Aorta (tissue), 5 donors: ENCODE measurements at regions of chr1 and their contacts with region 1.

Region 1: DNA sequence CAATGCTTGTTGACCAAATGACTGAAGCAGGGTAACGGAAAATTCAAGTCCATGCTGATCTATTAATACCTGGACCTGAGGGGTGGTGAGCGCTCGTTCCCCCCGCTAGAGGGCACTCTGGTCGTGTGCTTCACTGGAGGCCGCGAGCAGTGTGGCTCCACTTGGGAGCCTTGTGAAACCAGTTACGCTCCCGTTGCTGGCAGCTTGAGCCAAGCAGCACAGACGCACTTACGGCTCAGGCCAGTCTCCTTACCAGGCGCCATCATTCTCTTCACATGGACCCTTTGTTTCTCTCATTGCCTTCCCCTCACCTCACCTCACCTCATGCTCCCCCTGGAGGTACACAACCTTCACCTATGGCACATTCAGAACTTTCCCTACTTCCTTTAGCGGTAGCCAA is 49.7 kb upstream of the TSPAN2 start:
- DNase-seq: peak; percentile 92 to 94
- ATAC-seq: peak; percentile 91
- H3K4me3 ChIP-seq: no peak overlapping the region
- H3K27ac ChIP-seq: peak overlapping the region in 1 of 2 donors; percentile 19
- H3K4me1 ChIP-seq: peaks cover 3 to 9% of the 10 kb centered on the region in 2 donors
- H3K27me3 ChIP-seq: no peaks in the 10 kb centered on the region

Region 2: DNA sequence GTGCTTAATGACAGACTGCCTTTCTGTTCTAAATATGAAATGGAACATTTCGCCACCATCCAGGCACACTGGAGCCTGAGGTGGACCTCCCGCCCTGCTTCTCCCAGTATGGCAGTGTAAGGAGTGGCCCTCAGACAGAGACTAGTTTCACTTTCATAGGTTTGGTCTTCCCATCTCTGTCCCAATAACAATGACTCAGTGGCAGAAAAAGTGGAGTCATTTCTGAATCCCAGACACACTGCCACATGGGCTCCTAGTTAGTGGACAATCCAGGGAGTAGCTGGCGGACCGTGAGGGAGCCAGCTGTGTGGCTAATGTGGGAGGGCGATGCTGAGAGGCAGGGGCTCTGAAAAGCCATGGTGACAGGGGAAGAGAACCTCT is 46.0 kb after region 1 on chr1:
- intact Hi-C with region 1: loop called (anchors 2 to 5 kb)
- DNase-seq: peak in 1 of 2 donors; percentile 58
- ATAC-seq: peak; percentile 78
- H3K4me3 ChIP-seq: no peak overlapping the region
- H3K27ac ChIP-seq: peak overlapping the region; percentile 66 to 80
- H3K4me1 ChIP-seq: no peaks in the 10 kb centered on the region
- H3K27me3 ChIP-seq: no peaks in the 10 kb centered on the region

Region 3: GRCh38 chr1:115282807-115283208 is 143.8 kb after region 1 on chr1:
- intact Hi-C with region 1: loop called in 1 of 2 experiments (anchors 5 kb)
- DNase-seq: peak; percentile 86 to 88
- ATAC-seq: peak; percentile 89
- H3K4me3 ChIP-seq: no peak overlapping the region
- H3K27ac ChIP-seq: peak overlapping the region; percentile 50 to 91
- H3K4me1 ChIP-seq: peaks cover 0 to 5% of the 10 kb centered on the region in 2 donors
- H3K27me3 ChIP-seq: no peaks in the 10 kb centered on the region

Region 4: DNA sequence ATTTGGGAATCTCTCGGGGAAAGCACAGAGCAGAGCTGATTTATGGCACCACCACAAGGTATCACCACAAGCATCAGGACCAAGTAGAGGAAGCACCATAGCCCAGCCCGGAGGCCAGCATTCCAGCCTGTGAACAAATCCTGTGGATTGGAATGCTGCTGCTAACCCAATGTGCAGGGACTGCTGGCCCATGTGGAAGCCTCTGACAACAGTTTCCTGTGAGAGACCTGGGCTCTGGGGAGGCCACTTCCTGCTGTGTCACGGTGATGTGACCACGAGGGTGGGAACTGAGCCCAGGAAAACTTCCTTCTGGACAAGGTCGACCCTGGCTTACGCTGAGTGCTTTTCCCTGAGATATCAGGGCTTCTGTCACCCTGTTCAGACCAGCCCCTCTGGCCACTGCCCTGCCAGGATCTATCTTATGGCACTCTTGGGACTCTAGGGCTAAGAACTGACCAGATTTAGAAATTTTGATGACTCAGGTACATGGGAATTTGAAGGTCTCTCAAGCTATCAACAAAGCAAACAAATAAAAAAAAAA is 287.3 kb after region 1 on chr1:
- intact Hi-C with region 1: loop called in 1 of 2 experiments (anchors 5 kb)
- DNase-seq: peak; percentile 91 to 92
- ATAC-seq: peak; percentile 80
- H3K4me3 ChIP-seq: no peak overlapping the region
- H3K27ac ChIP-seq: peak overlapping the region; percentile 12 to 31
- H3K4me1 ChIP-seq: peaks cover 0 to 2% of the 10 kb centered on the region in 2 donors
- H3K27me3 ChIP-seq: no peaks in the 10 kb centered on the region

Region 5: GRCh38 chr1:115595279-115596079 is 456.5 kb after region 1 on chr1:
- intact Hi-C with region 1: loop called (anchors 2 to 5 kb)
- DNase-seq: peak; percentile 91 to 95
- ATAC-seq: peak; percentile 92
- H3K4me3 ChIP-seq: no peak overlapping the region
- H3K27ac ChIP-seq: no peak overlapping the region
- H3K4me1 ChIP-seq: no peaks in the 10 kb centered on the region
- H3K27me3 ChIP-seq: no peaks in the 10 kb centered on the region